PC-9 (cell line): ENCODE measurements at regions of chr5 and their contacts with region 1.

Region 1: GRCh38 chr5:149367249-149367971 is 9.6 kb downstream of the PCYOX1L start:
- DNase-seq: peak; percentile 64 to 76
- H3K4me3 ChIP-seq: no peak overlapping the region
- H3K27ac ChIP-seq: no peak overlapping the region
- H3K4me1 ChIP-seq: no peaks in the 10 kb centered on the region
- H3K27me3 ChIP-seq: no peaks in the 10 kb centered on the region
- CTCF ChIP-seq: peak; percentile 84

Region 2: DNA sequence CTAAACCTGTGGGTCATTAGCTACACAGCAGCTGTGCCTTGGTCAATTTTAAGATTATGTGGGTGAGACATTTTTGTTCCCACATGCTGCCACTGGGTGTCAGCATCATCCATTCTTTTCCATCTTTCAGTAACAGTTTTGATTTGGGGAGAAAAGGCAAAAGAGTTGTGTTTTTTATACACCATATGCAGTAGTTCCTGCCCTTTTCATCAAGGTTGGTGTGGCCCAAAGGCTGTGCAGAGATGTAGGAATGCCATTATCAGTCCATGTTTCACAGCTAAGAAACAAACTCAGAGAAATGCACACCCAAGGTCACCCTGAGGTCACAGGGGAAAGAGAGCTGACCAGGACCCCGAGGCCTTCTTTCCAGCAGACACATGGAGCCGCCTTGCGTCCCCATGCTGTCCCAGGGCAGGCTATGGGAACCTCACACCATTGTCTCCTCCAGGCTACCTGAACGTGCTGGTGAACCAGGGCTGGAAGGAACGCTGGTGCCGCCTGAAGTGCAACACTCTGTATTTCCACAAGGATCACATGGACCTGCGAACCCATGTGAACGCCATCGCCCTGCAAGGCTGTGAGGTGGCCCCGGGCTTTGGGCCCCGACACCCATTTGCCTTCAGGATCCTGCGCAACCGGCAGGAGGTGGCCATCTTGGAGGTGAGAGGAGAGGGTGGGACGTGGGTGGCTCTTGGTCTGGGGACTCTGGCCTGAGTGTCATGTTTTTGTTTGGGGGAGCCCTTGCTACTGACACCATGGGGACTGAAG is 49.9 kb before region 1 on chr5:
- CTCF ChIA-PET with region 1: interaction called, 11 read pairs
- POLR2A ChIA-PET with region 1: no interaction called
- intact Hi-C with region 1: loop called (anchors 1 kb)
- DNase-seq: peak in 1 of 2 experiments; percentile 34
- H3K4me3 ChIP-seq: no peak overlapping the region
- H3K27ac ChIP-seq: no peak overlapping the region
- H3K4me1 ChIP-seq: peaks cover 3% of the 10 kb centered on the region; the same call in 1 of the 2 replicates
- H3K27me3 ChIP-seq: no peaks in the 10 kb centered on the region
- CTCF ChIP-seq: peak; percentile 79

Region 3: DNA sequence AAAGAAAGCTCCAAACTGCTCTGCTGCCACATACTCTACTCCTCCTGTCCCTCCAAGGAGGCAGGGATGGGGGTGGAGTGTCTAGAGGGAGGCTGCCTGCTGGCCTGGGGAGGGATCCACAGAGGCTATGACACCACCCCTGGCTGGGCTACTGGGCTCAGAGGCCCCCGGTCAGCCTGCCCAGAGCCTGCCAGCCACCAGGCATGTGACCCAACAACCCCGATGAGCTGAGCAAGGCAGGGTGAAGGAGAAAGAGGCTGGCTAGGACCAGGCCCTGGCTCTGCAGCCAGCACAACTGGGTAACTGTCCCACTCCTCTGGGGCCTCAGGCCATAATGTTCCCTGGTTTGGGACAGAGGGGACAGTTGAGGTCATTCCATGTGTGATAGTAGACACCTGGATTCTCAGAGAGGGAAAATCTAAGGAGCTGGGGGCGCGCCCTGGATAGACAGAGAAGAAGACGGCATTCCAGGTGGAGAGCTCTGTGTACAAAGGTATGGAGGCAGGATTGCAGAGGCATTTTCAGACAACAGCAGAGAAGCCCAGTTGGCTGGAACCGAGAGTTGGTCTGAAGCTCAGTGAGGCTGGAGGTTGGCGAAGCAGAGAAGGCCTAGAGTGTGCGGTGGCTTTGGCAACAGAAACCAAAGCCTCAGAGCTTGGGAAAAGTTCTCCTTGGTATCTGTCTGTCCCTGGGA is 45.5 kb after region 1 on chr5:
- CTCF ChIA-PET with region 1: no interaction called
- POLR2A ChIA-PET with region 1: no interaction called
- intact Hi-C with region 1: no loop called
- DNase-seq: no peak
- H3K4me3 ChIP-seq: no peak overlapping the region
- H3K27ac ChIP-seq: no peak overlapping the region
- H3K4me1 ChIP-seq: no peaks in the 10 kb centered on the region
- H3K27me3 ChIP-seq: peaks cover 6% of the 10 kb centered on the region; the same call in 1 of the 2 replicates
- CTCF ChIP-seq: no peak

Region 4: GRCh38 chr5:150016537-150016936 is 649.1 kb after region 1 on chr5:
- CTCF ChIA-PET with region 1: no interaction called
- POLR2A ChIA-PET with region 1: interaction called, 44 read pairs
- intact Hi-C with region 1: no loop called
- DNase-seq: no peak
- H3K4me3 ChIP-seq: no peak overlapping the region
- H3K27ac ChIP-seq: peak overlapping the region; percentile 14
- H3K4me1 ChIP-seq: peaks cover 44% of the 10 kb centered on the region
- H3K27me3 ChIP-seq: no peaks in the 10 kb centered on the region
- CTCF ChIP-seq: no peak